ENCODE measurements at regions of chr3 and their contacts with region 1.

Region 1: GRCh38 chr3:149879872-149880271 is 66.9 kb downstream of the RNF13 start:
- DNase-seq: peak; percentile 77
- H3K4me3 ChIP-seq: no peak overlapping the region
- H3K27ac ChIP-seq: no peak overlapping the region
- H3K4me1 ChIP-seq: no peaks in the 10 kb centered on the region
- H3K27me3 ChIP-seq: no peaks in the 10 kb centered on the region
- CTCF ChIP-seq: peak; percentile 51 to 58
- POLR2A ChIP-seq: no peak

Region 2: DNA sequence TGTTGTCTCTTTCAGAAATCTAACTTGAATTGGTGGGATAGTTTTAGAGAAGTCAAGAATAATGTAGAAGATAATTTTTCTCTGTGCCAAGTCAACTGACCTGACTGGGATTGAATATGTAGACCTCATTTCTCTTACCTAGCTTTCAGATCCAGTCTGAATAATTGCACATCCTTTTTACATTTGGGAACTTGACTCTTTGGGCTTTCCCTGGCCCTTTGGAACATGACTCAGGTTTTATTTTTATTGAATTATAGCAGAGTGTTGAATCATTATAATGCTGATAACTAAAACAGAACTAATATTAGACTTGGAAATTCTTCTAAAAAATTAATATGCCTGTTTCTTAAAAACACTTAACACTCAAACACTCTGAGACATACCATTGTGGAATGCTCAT is 14.3 kb after region 1 on chr3:
- CTCF ChIA-PET with region 1: interaction called, 23 read pairs
- POLR2A ChIA-PET with region 1: no interaction called
- dilution Hi-C with region 1: no loop called
- intact Hi-C with region 1: no loop called
- DNase-seq: no peak
- H3K4me3 ChIP-seq: no peak overlapping the region
- H3K27ac ChIP-seq: no peak overlapping the region
- H3K4me1 ChIP-seq: peaks cover 6% of the 10 kb centered on the region
- H3K27me3 ChIP-seq: no peaks in the 10 kb centered on the region
- CTCF ChIP-seq: no peak
- POLR2A ChIP-seq: no peak

Region 3: GRCh38 chr3:149900322-149900721 is 20.4 kb after region 1 on chr3:
- CTCF ChIA-PET with region 1: interaction called, 23 read pairs
- POLR2A ChIA-PET with region 1: no interaction called
- dilution Hi-C with region 1: no loop called
- intact Hi-C with region 1: no loop called
- DNase-seq: no peak
- H3K4me3 ChIP-seq: no peak overlapping the region
- H3K27ac ChIP-seq: no peak overlapping the region
- H3K4me1 ChIP-seq: peaks cover 6% of the 10 kb centered on the region
- H3K27me3 ChIP-seq: no peaks in the 10 kb centered on the region
- CTCF ChIP-seq: no peak
- POLR2A ChIP-seq: no peak

Region 4: GRCh38 chr3:150194957-150195356 is 315.1 kb after region 1 on chr3:
- CTCF ChIA-PET with region 1: no interaction called
- POLR2A ChIA-PET with region 1: no interaction called
- dilution Hi-C with region 1: no loop called
- intact Hi-C with region 1: no loop called
- DNase-seq: no peak
- H3K4me3 ChIP-seq: no peak overlapping the region
- H3K27ac ChIP-seq: no peak overlapping the region
- H3K4me1 ChIP-seq: no peaks in the 10 kb centered on the region
- H3K27me3 ChIP-seq: peaks cover 7 to 10% of the 10 kb centered on the region in 2 experiments
- CTCF ChIP-seq: no peak
- POLR2A ChIP-seq: no peak

Measured in endothelial cell of umbilical vein (primary cell).